ENCODE measurements at regions of chr1 and their contacts with region 1.

Region 1: DNA sequence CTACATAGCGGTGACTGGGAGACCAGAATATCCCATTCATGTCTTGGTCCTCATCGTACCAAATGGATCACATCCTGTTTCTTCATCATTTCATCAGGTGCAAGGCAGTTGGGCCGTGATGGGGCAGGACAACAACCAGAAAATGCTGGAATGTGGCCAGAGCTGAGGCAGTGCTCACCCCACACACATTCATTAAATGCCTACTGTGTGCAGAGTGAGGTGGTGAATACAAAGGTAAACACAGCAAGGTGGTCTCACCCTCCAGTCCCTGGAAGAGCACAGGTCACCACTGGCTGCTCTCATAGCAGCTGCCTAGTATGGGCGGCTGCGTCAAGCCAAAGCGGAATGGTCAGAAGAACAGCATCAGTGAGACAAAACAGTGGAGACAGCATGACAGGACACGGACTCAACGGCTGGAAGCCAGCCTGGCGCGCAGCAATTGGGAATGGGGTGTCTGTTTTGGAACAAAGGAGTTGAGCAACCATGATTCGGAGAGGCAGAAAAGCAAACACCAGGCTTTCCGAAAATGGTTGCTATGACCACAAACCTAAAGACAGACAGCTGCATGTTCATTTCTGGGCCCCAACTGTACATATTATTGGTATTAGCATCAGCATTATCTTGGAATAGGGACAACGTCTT is 5.6 kb upstream of the ADAMTSL4 start:
- DNase-seq: no peak
- H3K4me3 ChIP-seq: no peak overlapping the region
- H3K27ac ChIP-seq: no peak overlapping the region
- H3K4me1 ChIP-seq: no peaks in the 10 kb centered on the region
- H3K27me3 ChIP-seq: no peaks in the 10 kb centered on the region
- CTCF ChIP-seq: no peak

Region 2: GRCh38 chr1:150067184-150068036 is 476.2 kb before region 1 on chr1 and contains the start of gene VPS45:
- CTCF ChIA-PET with region 1: no interaction called
- POLR2A ChIA-PET with region 1: no interaction called
- intact Hi-C with region 1: no loop called
- DNase-seq: peak; percentile 98
- H3K4me3 ChIP-seq: peak within 1 kb of the TSS; percentile 67
- H3K27ac ChIP-seq: peak within 1 kb of the TSS; percentile 97
- H3K4me1 ChIP-seq: peaks cover 23% of the 10 kb centered on the region
- H3K27me3 ChIP-seq: no peaks in the 10 kb centered on the region
- CTCF ChIP-seq: no peak
- total RNA-seq, gene VPS45: 50.3 and 51.3 TPM in 2 replicates

Region 3: DNA sequence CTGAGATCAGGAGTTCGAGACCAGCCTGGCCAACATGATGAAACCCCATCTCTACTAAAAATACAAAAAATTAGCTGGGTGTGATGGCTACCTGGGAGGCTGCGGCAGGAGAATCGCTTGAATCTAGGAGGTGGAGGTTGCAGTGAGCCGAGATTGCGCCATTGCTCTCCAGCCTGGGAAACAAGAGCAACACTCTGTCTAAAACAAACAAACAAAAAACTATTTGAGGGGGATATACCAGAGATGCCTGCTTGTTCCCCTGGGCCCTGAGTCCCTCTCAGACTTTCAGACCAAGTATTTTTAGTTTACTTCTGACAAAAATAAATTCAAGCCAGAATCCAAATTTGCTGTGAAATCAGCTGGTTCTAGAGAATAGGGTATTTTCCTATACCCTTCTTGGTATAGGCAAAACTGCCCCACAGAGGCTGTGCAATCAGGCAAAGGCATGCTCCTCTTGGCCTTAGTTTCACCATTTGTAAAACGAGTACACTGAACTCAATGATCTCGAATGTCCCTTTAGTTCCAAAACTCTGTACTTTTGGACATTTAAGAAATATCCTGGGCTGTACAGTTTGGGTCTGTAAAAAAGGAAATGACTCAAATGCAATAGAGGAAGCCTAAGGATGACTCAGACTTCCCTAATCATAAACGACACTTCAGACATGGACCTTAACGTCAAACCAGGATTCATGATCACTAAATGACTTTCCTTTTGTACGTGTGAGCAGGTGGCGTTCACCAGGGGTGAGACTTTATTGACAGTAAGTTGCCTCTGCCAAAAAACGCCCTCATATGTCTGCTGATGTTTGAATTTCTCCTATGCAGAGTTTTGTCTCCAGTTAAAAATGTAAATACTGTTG is 69.7 kb after region 1 on chr1:
- CTCF ChIA-PET with region 1: interaction called, 11 read pairs
- POLR2A ChIA-PET with region 1: no interaction called
- intact Hi-C with region 1: no loop called
- DNase-seq: peak; percentile 87
- H3K4me3 ChIP-seq: no peak overlapping the region
- H3K27ac ChIP-seq: peak overlapping the region; percentile 78
- H3K4me1 ChIP-seq: peaks cover 28% of the 10 kb centered on the region
- H3K27me3 ChIP-seq: no peaks in the 10 kb centered on the region
- CTCF ChIP-seq: no peak

Region 4: GRCh38 chr1:150808121-150808520 is 264.5 kb after region 1 on chr1 and contains the start of gene CTSK:
- CTCF ChIA-PET with region 1: no interaction called
- POLR2A ChIA-PET with region 1: no interaction called
- intact Hi-C with region 1: no loop called
- DNase-seq: peak; percentile 2
- H3K4me3 ChIP-seq: no peak within 1 kb of the TSS
- H3K27ac ChIP-seq: peak within 1 kb of the TSS; percentile 84
- H3K4me1 ChIP-seq: peaks cover 21% of the 10 kb centered on the region
- H3K27me3 ChIP-seq: no peaks in the 10 kb centered on the region
- CTCF ChIP-seq: no peak
- total RNA-seq, gene CTSK: 12.3 and 14.3 TPM in 2 replicates

Region 5: DNA sequence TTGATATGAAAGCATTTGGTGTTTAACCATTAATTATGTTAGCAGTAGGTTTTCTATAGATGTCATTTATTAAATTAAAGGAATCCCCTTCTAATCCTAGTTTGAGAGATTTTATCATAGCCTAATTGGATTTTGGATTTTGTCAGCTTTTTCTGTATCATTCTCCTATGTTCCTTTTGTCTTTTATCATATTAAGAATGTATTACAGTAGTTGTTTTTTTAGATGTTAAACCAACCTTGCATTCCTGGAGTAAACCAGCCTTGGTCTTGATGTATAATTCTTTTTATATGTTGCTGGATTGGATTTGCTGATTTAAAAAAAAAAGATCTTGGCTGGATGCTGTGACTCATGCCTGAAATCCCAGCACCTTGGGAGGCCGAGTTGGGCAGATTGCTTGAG is 388.2 kb after region 1 on chr1:
- CTCF ChIA-PET with region 1: no interaction called
- POLR2A ChIA-PET with region 1: no interaction called
- intact Hi-C with region 1: no loop called
- DNase-seq: peak; percentile 31
- H3K4me3 ChIP-seq: no peak overlapping the region
- H3K27ac ChIP-seq: no peak overlapping the region
- H3K4me1 ChIP-seq: peaks cover 3% of the 10 kb centered on the region
- H3K27me3 ChIP-seq: no peaks in the 10 kb centered on the region
- CTCF ChIP-seq: no peak